ENCODE measurements at regions of chr1 and their contacts with region 1.

Region 1: DNA sequence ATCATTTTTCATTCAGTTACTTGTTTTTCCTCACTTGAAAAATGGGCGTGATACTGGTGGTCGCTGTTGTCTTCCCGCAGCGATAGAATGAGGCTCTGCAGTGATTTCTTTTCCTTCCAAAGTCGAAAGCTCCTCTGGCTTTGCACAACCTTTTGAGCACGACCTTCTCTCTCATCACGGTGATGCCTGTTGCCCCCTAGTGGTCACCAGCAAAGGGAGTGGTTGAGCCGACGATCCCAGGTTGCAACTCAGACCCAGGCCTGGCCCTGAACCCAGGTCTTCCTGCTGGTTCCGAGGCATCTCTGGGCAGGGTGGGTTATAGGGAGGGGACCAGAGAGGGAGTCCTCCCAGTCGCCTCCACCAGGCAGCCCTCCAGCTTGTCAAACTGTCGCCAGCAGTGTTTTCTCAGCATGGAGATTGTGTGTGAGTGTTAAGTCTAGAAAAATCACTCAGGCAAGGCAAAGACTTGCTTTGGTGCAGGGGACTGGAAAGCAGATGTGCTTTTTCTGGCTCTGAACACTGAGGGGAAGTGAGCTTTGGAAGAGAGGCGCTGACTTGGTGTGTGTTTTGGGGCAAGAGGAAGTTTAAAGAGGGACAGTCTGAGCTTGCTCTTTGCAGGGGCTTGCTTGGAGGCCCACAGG is 285.3 kb downstream of the CAMTA1 start:
- DNase-seq: peak in 9 of 10 donors; percentile 39 to 94 (median 66)

Region 2: DNA sequence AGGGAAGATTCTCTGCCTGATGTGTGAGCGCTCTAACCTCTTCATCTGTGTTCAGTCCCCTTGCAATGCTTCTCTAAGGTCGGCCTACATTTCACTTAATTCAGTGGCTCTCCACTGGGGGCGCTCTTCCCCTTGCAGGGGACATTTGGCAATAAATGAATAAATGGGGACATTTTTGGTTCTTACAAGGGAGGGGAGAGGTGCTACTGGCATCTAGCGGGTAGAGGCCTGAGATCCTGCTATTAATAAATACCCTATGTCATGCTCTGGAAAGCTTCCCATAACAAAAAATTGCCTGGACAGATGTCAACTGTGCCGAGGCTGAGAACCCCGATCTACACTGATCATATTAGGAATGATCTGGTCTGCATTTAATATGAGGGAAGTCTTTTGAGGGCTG is 343.0 kb before region 1 on chr1:
- intact Hi-C with region 1: loop called (anchors 10 kb)
- DNase-seq: peak in 4 of 10 donors; percentile 29 to 85 (median 42)

Region 3: GRCh38 chr1:6794164-6794563 is 276.3 kb before region 1 on chr1:
- intact Hi-C with region 1: loop called (anchors 2 kb)
- DNase-seq: no peak

Region 4: GRCh38 chr1:7646981-7647901 is 576.7 kb after region 1 on chr1:
- intact Hi-C with region 1: loop called (anchors 10 kb)
- DNase-seq: peak; percentile 43 to 96 (median 80)

Measured in posterior cingulate gyrus (tissue), 11 donors.